Sigmoid colon (tissue), 7 donors: ENCODE measurements at regions of chr4 and their contacts with region 1.

Region 1: GRCh38 chr4:175560604-175561003 is 251.5 kb downstream of the GPM6A start:
- DNase-seq: no peak
- H3K4me3 ChIP-seq: no peak overlapping the region
- H3K27ac ChIP-seq: no peak overlapping the region
- H3K4me1 ChIP-seq: no peaks in the 10 kb centered on the region
- H3K27me3 ChIP-seq: no peaks in the 10 kb centered on the region
- CTCF ChIP-seq: peak in 1 of 4 experiments; percentile 5
- EP300 ChIP-seq: no peak
- POLR2A ChIP-seq: no peak

Region 2: DNA sequence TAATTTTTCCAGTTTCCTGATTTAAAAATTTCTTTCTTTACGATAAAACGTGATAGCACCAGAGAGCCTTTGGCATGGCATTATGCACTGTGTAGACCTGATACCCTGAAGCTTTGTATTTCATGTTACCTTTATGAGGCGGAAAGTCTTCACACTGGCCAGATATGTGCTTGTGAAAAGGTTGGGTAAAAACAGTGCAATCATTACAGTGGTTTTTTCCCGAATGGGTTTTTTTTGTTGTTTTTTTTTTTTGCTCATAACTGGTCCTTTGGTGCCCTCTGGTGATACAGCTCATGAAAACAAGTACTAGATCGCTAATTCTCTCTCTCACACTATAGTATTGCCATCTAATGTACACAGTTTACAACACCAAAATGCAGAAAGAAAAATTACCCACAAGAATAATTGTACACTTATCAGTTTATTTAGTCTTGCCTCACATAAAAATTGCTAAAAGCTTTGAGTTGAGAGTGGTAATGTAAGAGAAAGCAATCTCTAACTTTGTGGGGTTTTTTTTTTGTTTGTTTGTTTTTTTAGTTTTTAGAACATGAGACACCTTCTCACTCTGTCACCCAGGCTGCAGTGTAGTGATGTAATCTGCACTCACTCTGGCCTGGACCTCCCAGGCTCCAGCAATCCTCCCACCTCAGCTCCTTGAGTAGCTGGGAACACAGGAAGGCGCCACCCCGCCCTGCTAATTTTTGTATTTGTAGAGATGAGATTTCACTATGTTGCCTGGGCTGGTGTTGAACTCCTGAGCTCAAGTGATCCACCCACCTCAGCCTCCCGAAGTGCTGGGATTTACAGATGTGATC is 780.5 kb after region 1 on chr4:
- intact Hi-C with region 1: loop called (anchors 5 kb)
- DNase-seq: no peak
- H3K4me3 ChIP-seq: peak overlapping the region in 2 of 4 donors; percentile 14 to 20
- H3K27ac ChIP-seq: no peak overlapping the region
- H3K4me1 ChIP-seq: peaks cover 0 to 33% (median 11%) of the 10 kb centered on the region in 4 donors
- H3K27me3 ChIP-seq: no peaks in the 10 kb centered on the region
- CTCF ChIP-seq: peak in 3 of 4 experiments; percentile 22 to 54 (median 42)
- EP300 ChIP-seq: no peak
- POLR2A ChIP-seq: no peak